ENCODE measurements at regions of chr18 and their contacts with region 1.

Region 1: GRCh38 chr18:36828630-36829361 is at the starts of genes KIAA1328 and TPGS2:
- DNase-seq: peak; percentile 92
- ATAC-seq: peak; percentile 92
- H3K4me3 Mint-ChIP-seq: peak within 1 kb of the TSS; percentile 92
- H3K27ac Mint-ChIP-seq: peak within 1 kb of the TSS; percentile 94
- H3K4me1 Mint-ChIP-seq: peaks cover 46% of the 10 kb centered on the region
- H3K27me3 Mint-ChIP-seq: no peaks in the 10 kb centered on the region
- total RNA-seq, gene KIAA1328: 8.6 to 11.2 TPM
- total RNA-seq, gene TPGS2: 119 to 120 TPM

Region 2: DNA sequence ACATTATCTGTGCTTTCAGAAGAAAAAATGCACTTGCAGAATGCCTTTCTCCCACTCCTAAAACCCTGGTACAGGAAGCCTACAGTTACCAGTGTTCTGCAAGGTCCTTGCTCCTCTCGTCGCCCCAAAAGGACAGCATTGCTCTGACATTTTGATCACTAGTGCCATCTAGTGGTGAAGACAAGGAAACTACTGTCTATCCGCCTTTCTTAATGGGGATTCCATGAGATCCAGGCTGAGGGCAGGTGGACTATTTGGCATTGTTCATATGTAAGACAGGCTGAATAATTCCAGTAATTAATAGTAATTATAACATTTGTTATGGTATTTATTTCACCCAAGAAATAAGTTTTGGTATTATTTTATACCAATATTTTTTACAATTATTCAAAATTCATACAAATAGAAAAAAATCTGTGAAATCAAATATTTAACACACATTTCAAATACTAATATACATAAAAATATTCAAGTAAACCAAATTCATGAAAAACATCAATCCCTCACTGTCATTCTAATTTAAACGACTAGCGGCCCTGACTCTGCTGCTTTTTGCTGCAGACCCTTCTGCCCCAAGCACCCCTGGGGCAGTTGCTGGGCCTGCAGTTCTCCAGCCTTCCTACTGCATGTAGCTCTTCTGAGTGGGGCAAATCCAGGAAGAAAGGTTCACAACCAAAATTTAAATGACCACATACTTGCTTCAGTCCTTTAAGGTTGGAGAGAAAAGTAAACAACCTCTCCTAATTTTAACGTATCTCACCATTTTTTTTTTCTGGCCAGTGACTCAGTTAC is 19.0 kb before region 1 on chr18:
- CTCF ChIA-PET with region 1: interaction called, 15 read pairs
- DNase-seq: peak; percentile 49
- ATAC-seq: peak; percentile 94
- H3K4me3 Mint-ChIP-seq: no peak overlapping the region
- H3K27ac Mint-ChIP-seq: peak overlapping the region; percentile 45
- H3K4me1 Mint-ChIP-seq: peaks cover 18% of the 10 kb centered on the region
- H3K27me3 Mint-ChIP-seq: no peaks in the 10 kb centered on the region

Measured in activated CD8-positive, alpha-beta memory T cell treated with anti-CD3 and anti-CD28 coated beads, Interleukin-2, amount 10 ng/mL, durations not matched to agents 7 days and 5 days (primary cell).